PC-9 (cell line): ENCODE measurements at regions of chr1 and their contacts with region 1.

Region 1: GRCh38 chr1:24283326-24284155 is 35.6 kb upstream of the GRHL3 start:
- DNase-seq: peak; percentile 54 to 90
- H3K4me3 ChIP-seq: no peak overlapping the region
- H3K27ac ChIP-seq: peak overlapping the region; percentile 94
- H3K4me1 ChIP-seq: peaks cover 59% of the 10 kb centered on the region
- H3K27me3 ChIP-seq: no peaks in the 10 kb centered on the region
- CTCF ChIP-seq: no peak

Region 2: DNA sequence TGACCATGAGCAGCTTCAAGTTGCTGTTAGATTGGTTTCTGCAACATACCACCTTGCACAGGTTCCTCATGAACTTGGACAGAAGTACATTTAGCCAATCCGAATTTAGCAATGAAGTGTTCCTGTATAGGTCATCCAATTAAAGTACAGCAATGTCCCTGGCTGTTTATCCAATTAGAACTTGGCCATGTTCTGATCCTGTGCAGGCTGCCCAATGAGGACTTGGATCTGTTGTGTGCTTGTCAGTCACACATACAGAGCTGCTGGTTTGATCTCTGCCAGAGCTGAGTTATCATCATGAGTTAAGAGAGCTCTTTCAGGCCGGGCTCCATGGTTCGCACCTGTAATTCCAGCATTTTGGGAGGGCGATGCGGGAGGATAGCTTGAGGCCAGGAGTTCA is 74.5 kb before region 1 on chr1:
- CTCF ChIA-PET with region 1: interaction called, 15 read pairs
- POLR2A ChIA-PET with region 1: interaction called, 17 read pairs
- intact Hi-C with region 1: no loop called
- DNase-seq: no peak
- H3K4me3 ChIP-seq: no peak overlapping the region
- H3K27ac ChIP-seq: no peak overlapping the region
- H3K4me1 ChIP-seq: peaks cover 3% of the 10 kb centered on the region
- H3K27me3 ChIP-seq: no peaks in the 10 kb centered on the region
- CTCF ChIP-seq: no peak